Body of pancreas (tissue), 4 donors: ENCODE measurements at regions of chr7 and their contacts with region 1.

Region 1: GRCh38 chr7:87886875-87887274 is 10.6 kb downstream of the DBF4 start:
- DNase-seq: no peak
- ATAC-seq: no peak
- H3K4me3 ChIP-seq: no peak overlapping the region
- H3K27ac ChIP-seq: no peak overlapping the region
- H3K4me1 ChIP-seq: no peaks in the 10 kb centered on the region
- H3K27me3 ChIP-seq: no peaks in the 10 kb centered on the region
- CTCF ChIP-seq: peak in 6 of 7 experiments; percentile 23 to 62 (median 48)
- POLR2A ChIP-seq: no peak

Region 2: DNA sequence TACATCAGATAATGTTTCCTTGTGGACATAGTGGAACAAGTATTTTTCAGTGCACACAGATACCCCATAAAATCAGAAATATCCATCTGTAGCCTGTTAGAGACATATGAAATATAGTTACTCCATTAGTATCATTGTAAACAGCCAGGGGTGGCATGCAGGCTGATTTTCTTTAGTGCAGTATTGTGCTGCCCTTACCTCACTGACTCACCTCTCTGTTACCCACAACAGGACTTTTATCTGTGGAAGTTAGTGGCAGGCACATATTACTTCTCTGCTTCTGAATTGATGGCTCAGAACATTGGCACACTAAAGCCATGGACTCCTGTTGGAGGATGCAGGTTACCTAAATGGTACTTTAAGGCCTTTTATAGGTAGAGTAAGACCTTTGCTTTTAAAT is 80.7 kb before region 1 on chr7:
- intact Hi-C with region 1: loop called (anchors 10 kb)
- DNase-seq: no peak
- ATAC-seq: no peak
- H3K4me3 ChIP-seq: no peak overlapping the region
- H3K27ac ChIP-seq: no peak overlapping the region
- H3K4me1 ChIP-seq: no peaks in the 10 kb centered on the region
- H3K27me3 ChIP-seq: no peaks in the 10 kb centered on the region
- CTCF ChIP-seq: no peak
- POLR2A ChIP-seq: no peak

Region 3: GRCh38 chr7:87926581-87927461 is 39.9 kb after region 1 on chr7:
- intact Hi-C with region 1: no loop called
- DNase-seq: peak in 1 of 4 donors; percentile 53
- ATAC-seq: no peak
- H3K4me3 ChIP-seq: no peak overlapping the region
- H3K27ac ChIP-seq: no peak overlapping the region
- H3K4me1 ChIP-seq: no peaks in the 10 kb centered on the region
- H3K27me3 ChIP-seq: no peaks in the 10 kb centered on the region
- CTCF ChIP-seq: no peak
- POLR2A ChIP-seq: no peak

Region 4: GRCh38 chr7:87960239-87960638 is 73.4 kb after region 1 on chr7:
- intact Hi-C with region 1: no loop called
- DNase-seq: no peak
- ATAC-seq: no peak
- H3K4me3 ChIP-seq: no peak overlapping the region
- H3K27ac ChIP-seq: no peak overlapping the region
- H3K4me1 ChIP-seq: no peaks in the 10 kb centered on the region
- H3K27me3 ChIP-seq: no peaks in the 10 kb centered on the region
- CTCF ChIP-seq: no peak
- POLR2A ChIP-seq: no peak